Ovary (tissue), 10 donors: ENCODE measurements at regions of chr13 and their contacts with region 1.

Region 1: GRCh38 chr13:20940083-20940880 is 37.7 kb upstream of the XPO4 start:
- DNase-seq: no peak
- H3K4me3 ChIP-seq: no peak overlapping the region
- H3K27ac ChIP-seq: no peak overlapping the region
- H3K4me1 ChIP-seq: no peaks in the 10 kb centered on the region
- H3K27me3 ChIP-seq: no peaks in the 10 kb centered on the region
- CTCF ChIP-seq: no peak
- EP300 ChIP-seq: no peak
- POLR2A ChIP-seq: no peak

Region 2: DNA sequence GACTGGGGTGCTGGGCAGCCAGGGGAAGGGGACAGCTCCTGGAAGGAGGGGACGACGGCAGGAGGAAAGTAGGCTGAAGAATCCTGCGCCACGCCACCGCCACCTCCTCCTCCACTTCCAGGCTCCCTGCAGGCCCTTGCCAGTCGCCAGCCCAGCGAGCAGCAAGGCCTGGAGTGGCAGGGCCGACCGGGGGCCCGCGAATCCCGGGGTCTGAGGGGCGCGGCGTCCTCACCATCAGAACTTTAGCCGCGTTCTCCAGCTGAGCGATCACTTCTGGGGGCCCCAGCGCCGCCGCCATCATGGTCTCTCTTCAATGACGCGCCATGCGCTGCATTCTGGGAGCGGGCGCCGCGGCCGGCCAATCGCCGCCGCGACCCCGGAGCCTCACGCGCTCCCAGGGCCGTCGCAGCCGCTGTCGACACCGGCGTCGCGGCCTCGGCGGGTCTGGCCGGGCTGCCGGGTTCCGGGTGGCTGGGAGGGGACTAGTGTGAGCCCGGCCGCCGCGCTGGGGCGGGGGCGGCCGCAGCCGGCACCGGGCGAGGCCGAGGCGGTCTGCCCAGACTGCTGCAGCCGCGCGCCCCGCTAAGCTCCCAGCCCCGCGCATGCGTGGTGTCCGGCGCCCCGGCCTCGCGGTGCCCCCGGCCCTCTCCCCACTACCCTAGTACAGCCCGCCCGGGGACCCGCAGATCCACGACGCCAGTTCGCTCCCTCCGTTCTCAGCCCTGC is 37.7 kb before region 1 on chr13 and contains the start of gene XPO4:
- intact Hi-C with region 1: no loop called
- DNase-seq: peak; percentile 66 to 86 (median 76)
- H3K4me3 ChIP-seq: peak within 1 kb of the TSS; percentile 83
- H3K27ac ChIP-seq: peak within 1 kb of the TSS; percentile 87 to 93
- H3K4me1 ChIP-seq: no peaks in the 10 kb centered on the region
- H3K27me3 ChIP-seq: no peaks in the 10 kb centered on the region
- CTCF ChIP-seq: peak in 1 of 3 donors; percentile 7
- EP300 ChIP-seq: no peak
- POLR2A ChIP-seq: no peak
- total RNA-seq, gene XPO4: 9.8 to 20.6 (median 14.9) TPM

Region 3: DNA sequence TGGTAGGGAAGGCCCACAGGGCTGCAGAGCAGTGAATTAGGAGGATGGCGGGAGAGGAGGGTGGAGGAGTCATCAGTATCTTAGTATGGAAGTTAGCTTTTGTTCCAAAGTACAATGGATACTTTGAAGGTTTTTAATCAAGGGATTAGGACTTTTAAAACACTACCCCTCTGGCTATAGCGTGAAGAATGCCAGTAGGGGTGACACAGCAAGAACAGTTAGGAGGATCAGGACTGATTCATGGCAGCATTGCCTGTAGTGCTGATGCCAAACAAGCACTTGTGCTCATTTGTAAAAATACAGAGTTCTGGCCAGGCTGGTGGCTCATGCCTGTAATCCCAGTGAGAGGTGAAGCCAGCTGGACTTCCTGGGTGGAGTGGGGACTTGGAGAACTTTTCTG is 189.8 kb after region 1 on chr13:
- intact Hi-C with region 1: loop called (anchors 5 to 10 kb)
- DNase-seq: no peak
- H3K4me3 ChIP-seq: no peak overlapping the region
- H3K27ac ChIP-seq: no peak overlapping the region
- H3K4me1 ChIP-seq: no peaks in the 10 kb centered on the region
- H3K27me3 ChIP-seq: no peaks in the 10 kb centered on the region
- CTCF ChIP-seq: no peak
- EP300 ChIP-seq: no peak
- POLR2A ChIP-seq: no peak

Region 4: GRCh38 chr13:21240586-21240985 is 300.3 kb after region 1 on chr13:
- intact Hi-C with region 1: no loop called
- DNase-seq: no peak
- H3K4me3 ChIP-seq: no peak overlapping the region
- H3K27ac ChIP-seq: no peak overlapping the region
- H3K4me1 ChIP-seq: no peaks in the 10 kb centered on the region
- H3K27me3 ChIP-seq: no peaks in the 10 kb centered on the region
- CTCF ChIP-seq: no peak
- EP300 ChIP-seq: no peak
- POLR2A ChIP-seq: no peak

Region 5: GRCh38 chr13:21476893-21477472 is 536.7 kb after region 1 on chr13:
- intact Hi-C with region 1: loop called in 2 of 4 experiments (anchors 5 to 10 kb)
- DNase-seq: peak; percentile 56 to 79 (median 75)
- H3K4me3 ChIP-seq: peak overlapping the region; percentile 29
- H3K27ac ChIP-seq: no peak overlapping the region
- H3K4me1 ChIP-seq: peaks cover 2% of the 10 kb centered on the region
- H3K27me3 ChIP-seq: no peaks in the 10 kb centered on the region
- CTCF ChIP-seq: peak; percentile 56 to 71 (median 61)
- EP300 ChIP-seq: no peak
- POLR2A ChIP-seq: no peak

Region 6: DNA sequence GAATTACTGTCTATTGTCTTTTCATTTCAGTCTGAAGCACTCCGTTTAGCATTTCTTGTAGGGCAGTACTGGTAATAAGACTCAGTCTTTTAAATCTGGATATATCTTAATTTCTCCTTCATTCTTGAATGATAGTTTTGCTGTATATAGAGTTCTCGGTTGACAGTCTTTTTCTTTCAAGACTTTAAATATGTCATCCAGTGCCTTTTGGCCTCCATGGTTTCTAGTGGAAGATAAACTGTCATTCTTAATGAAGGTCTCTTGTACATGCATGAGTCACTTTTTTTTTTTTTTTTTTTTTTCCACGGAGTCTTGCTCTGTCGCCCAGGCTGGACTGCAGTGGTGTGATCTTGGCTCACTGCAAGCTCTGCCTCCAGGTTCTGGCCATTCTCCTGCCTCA is 546.0 kb after region 1 on chr13:
- intact Hi-C with region 1: loop called in 1 of 4 experiments (anchors 5 kb)
- DNase-seq: no peak
- H3K4me3 ChIP-seq: no peak overlapping the region
- H3K27ac ChIP-seq: no peak overlapping the region
- H3K4me1 ChIP-seq: no peaks in the 10 kb centered on the region
- H3K27me3 ChIP-seq: no peaks in the 10 kb centered on the region
- CTCF ChIP-seq: no peak
- EP300 ChIP-seq: no peak
- POLR2A ChIP-seq: no peak